Activated CD4-positive, alpha-beta T cell treated with anti-CD3 and anti-CD28 coated beads for 36 hours (primary cell): ENCODE measurements at regions of chr6 and their contacts with region 1.

Region 1: GRCh38 chr6:170529839-170530469 is 23.2 kb downstream of the PSMB1 start:
- DNase-seq: peak; percentile 83
- ATAC-seq: peak; percentile 76
- H3K4me3 Mint-ChIP-seq: no peak overlapping the region
- H3K27ac Mint-ChIP-seq: no peak overlapping the region
- H3K4me1 Mint-ChIP-seq: no peaks in the 10 kb centered on the region
- H3K27me3 Mint-ChIP-seq: no peaks in the 10 kb centered on the region

Region 2: GRCh38 chr6:169950558-169950957 is 579.4 kb before region 1 on chr6:
- CTCF ChIA-PET with region 1: interaction called, 6 read pairs
- POLR2A ChIA-PET with region 1: no interaction called
- intact Hi-C with region 1: loop called in 1 of 2 experiments (anchors 2 kb)
- DNase-seq: peak; percentile 62
- ATAC-seq: peak; percentile 63
- H3K4me3 Mint-ChIP-seq: no peak overlapping the region
- H3K27ac Mint-ChIP-seq: no peak overlapping the region
- H3K4me1 Mint-ChIP-seq: no peaks in the 10 kb centered on the region
- H3K27me3 Mint-ChIP-seq: no peaks in the 10 kb centered on the region

Region 3: DNA sequence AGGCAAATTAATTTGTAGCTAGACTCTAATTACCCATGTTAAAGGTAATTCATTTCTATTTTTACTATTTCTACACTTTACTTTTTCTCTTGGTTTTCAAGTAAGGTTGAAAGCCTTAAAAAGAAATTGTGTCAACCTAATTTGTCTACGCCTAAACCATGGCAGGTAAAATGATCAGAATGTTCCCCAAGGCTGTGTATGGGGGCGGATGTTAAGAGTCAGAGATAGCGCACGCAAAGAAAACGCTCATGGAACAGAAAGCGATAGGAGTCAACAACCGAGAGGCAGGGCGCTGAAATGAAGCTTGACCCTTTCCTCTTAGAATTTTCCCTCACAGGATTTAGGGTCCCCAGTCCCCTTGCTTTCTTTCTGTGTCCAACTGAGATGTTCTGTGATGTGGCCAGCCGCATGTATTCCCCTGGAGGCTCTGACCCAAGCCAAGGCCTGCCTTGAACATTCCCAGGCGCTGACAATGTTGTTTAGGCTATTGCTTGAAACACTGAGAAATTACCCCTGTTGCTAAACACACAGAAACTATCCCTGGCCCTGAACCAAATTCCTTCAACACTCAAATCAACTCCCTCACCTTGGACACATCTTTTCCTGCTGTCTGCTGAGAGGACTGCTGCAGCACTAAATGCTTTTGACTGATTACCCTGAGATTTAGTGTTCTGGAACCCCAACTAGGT is 12.2 kb after region 1 on chr6:
- CTCF ChIA-PET with region 1: interaction called, 30 read pairs
- POLR2A ChIA-PET with region 1: no interaction called
- intact Hi-C with region 1: no loop called
- DNase-seq: no peak
- ATAC-seq: no peak
- H3K4me3 Mint-ChIP-seq: no peak overlapping the region
- H3K27ac Mint-ChIP-seq: peak overlapping the region; percentile 8
- H3K4me1 Mint-ChIP-seq: peaks cover 21% of the 10 kb centered on the region
- H3K27me3 Mint-ChIP-seq: no peaks in the 10 kb centered on the region